ENCODE measurements at regions of chr5 and their contacts with region 1.

Region 1: DNA sequence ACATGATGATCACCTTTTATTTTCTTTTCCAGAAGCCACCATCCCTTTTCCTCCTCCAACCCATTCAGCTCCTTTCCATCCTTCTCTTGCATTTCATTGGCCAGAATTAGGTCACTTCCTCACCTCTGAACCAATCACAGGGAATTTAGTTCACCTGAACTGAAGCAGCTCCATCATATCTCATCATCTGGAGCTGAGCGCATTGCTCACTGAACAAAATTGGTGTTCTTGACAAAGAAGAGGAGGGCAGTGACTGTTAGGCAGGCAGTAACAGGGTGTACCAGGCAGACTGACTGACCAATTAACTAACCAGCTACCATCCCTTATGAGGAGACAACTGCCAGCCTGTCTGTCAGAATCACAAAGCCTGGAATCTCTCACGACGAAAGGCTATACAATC is 1.8 kb upstream of the ZNF354A start:
- DNase-seq: no peak
- H3K4me3 Mint-ChIP-seq: no peak overlapping the region
- H3K27ac Mint-ChIP-seq: no peak overlapping the region
- H3K4me1 Mint-ChIP-seq: peaks cover 10% of the 10 kb centered on the region
- H3K27me3 Mint-ChIP-seq: no peaks in the 10 kb centered on the region

Region 2: GRCh38 chr5:178626484-178627258 is 105.6 kb before region 1 on chr5 and contains the start of gene CLK4:
- CTCF ChIA-PET with region 1: no interaction called
- POLR2A ChIA-PET with region 1: no interaction called
- intact Hi-C with region 1: loop called (anchors 1 kb)
- DNase-seq: peak; percentile 97
- H3K4me3 Mint-ChIP-seq: peak within 1 kb of the TSS; percentile 92
- H3K27ac Mint-ChIP-seq: peak within 1 kb of the TSS; percentile 98
- H3K4me1 Mint-ChIP-seq: peaks cover 28% of the 10 kb centered on the region
- H3K27me3 Mint-ChIP-seq: no peaks in the 10 kb centered on the region
- total RNA-seq, gene CLK4: 25.1 to 26.0 TPM

Region 3: DNA sequence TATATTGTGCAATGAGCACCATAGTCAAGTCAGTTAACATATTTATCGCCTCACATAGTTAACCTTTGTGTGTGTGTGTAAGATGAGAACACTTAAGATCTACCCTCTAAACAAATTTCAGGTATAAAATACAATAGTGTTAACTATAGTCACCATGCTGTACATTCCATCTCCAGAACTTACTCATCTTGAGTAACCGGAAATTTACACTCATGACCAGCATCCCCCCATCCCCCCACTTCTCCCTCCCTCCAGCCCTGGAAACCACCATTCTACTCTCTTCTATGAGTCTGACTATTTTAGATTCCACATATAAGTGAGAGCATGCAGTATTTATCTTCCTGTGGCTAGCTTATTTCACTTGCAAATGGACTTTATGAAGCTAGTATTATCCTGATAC is 42.1 kb before region 1 on chr5:
- CTCF ChIA-PET with region 1: no interaction called
- POLR2A ChIA-PET with region 1: no interaction called
- intact Hi-C with region 1: no loop called
- DNase-seq: no peak
- H3K4me3 Mint-ChIP-seq: no peak overlapping the region
- H3K27ac Mint-ChIP-seq: no peak overlapping the region
- H3K4me1 Mint-ChIP-seq: no peaks in the 10 kb centered on the region
- H3K27me3 Mint-ChIP-seq: peaks cover 7% of the 10 kb centered on the region

Region 4: DNA sequence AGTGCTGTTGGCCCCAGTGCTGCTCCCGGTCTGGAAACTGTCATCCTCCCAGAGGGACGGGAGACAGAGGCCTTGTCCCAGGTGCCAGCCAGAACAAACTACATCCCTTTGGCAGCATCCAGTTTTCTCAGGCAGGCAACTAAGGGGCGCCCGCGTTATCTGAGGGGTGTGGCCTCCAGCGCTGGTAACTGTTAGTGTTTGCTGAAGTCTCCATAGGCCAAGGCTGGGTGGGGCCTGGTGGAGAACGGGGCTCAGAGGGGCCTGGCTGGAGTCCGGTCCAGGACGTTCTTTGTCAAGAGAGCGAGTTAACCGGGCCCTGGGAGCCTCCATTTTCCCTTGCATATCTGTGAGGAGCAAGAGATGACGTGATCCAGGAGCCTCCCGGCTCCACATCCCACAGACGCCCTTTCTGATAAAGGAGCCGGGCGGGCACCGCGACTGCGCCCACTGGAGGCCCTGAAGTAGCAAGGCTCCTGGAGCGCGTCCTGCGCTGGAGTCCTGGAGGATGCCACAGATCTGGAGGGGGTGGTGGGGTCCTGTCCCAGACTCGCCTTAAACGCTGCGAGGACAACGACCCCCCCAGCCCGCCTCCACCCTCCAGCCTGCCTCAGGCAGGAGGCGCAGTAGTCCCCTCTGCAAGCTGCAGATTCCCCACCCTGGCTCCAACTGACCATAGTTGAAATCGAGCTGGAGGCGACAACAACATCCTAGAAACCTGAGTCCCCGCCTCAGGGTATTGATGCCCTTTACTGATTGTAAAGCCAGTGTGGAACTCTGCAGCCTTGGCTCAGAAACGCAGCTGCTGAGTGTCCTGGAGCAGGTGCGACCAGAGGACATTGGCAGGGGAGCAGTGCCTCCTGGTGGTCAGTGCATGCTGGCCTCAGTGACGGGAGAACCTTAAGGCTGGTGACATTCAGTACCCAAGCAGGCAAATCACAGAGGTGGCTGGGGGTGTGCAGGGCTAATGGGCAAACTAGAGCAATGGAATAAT is 106.7 kb after region 1 on chr5:
- CTCF ChIA-PET with region 1: no interaction called
- POLR2A ChIA-PET with region 1: no interaction called
- intact Hi-C with region 1: loop called (anchors 1 kb)
- DNase-seq: peak; percentile 71
- H3K4me3 Mint-ChIP-seq: no peak overlapping the region
- H3K27ac Mint-ChIP-seq: no peak overlapping the region
- H3K4me1 Mint-ChIP-seq: no peaks in the 10 kb centered on the region
- H3K27me3 Mint-ChIP-seq: peaks cover 2% of the 10 kb centered on the region

Region 5: GRCh38 chr5:179023528-179024430 is 291.5 kb after region 1 on chr5 and contains the start of gene ZNF879:
- CTCF ChIA-PET with region 1: no interaction called
- POLR2A ChIA-PET with region 1: no interaction called
- intact Hi-C with region 1: loop called (anchors 1 kb)
- DNase-seq: peak; percentile 96
- H3K4me3 Mint-ChIP-seq: peak within 1 kb of the TSS; percentile 96
- H3K27ac Mint-ChIP-seq: peak within 1 kb of the TSS; percentile 83
- H3K4me1 Mint-ChIP-seq: peaks cover 7% of the 10 kb centered on the region
- H3K27me3 Mint-ChIP-seq: peaks cover 1% of the 10 kb centered on the region
- total RNA-seq, gene ZNF879: 2.4 TPM

Region 6: GRCh38 chr5:179060116-179061008 is 328.1 kb after region 1 on chr5 and contains the start of gene ZNF354C:
- CTCF ChIA-PET with region 1: interaction called, 8 read pairs
- POLR2A ChIA-PET with region 1: no interaction called
- intact Hi-C with region 1: loop called (anchors 1 kb)
- DNase-seq: peak; percentile 91
- H3K4me3 Mint-ChIP-seq: peak within 1 kb of the TSS; percentile 82
- H3K27ac Mint-ChIP-seq: peak within 1 kb of the TSS; percentile 88
- H3K4me1 Mint-ChIP-seq: peaks cover 30% of the 10 kb centered on the region
- H3K27me3 Mint-ChIP-seq: peaks cover 6% of the 10 kb centered on the region
- total RNA-seq, gene ZNF354C: 5.9 to 6.0 TPM

Region 7: GRCh38 chr5:179142434-179143198 is 410.3 kb after region 1 on chr5:
- CTCF ChIA-PET with region 1: no interaction called
- POLR2A ChIA-PET with region 1: no interaction called
- intact Hi-C with region 1: loop called (anchors 2 kb)
- DNase-seq: peak; percentile 61
- H3K4me3 Mint-ChIP-seq: no peak overlapping the region
- H3K27ac Mint-ChIP-seq: peak overlapping the region; percentile 77
- H3K4me1 Mint-ChIP-seq: peaks cover 26% of the 10 kb centered on the region
- H3K27me3 Mint-ChIP-seq: no peaks in the 10 kb centered on the region

Region 8: GRCh38 chr5:179495906-179496455 is 763.7 kb after region 1 on chr5:
- CTCF ChIA-PET with region 1: interaction called, 14 read pairs
- POLR2A ChIA-PET with region 1: no interaction called
- intact Hi-C with region 1: loop called (anchors 2 kb)
- DNase-seq: no peak
- H3K4me3 Mint-ChIP-seq: no peak overlapping the region
- H3K27ac Mint-ChIP-seq: no peak overlapping the region
- H3K4me1 Mint-ChIP-seq: no peaks in the 10 kb centered on the region
- H3K27me3 Mint-ChIP-seq: no peaks in the 10 kb centered on the region

Measured in activated CD4-positive, alpha-beta memory T cell treated with anti-CD3 and anti-CD28 coated beads for 36 hours (primary cell).